Vagina (tissue), 2 donors: ENCODE measurements at regions of chr20 and their contacts with region 1.

Region 1: DNA sequence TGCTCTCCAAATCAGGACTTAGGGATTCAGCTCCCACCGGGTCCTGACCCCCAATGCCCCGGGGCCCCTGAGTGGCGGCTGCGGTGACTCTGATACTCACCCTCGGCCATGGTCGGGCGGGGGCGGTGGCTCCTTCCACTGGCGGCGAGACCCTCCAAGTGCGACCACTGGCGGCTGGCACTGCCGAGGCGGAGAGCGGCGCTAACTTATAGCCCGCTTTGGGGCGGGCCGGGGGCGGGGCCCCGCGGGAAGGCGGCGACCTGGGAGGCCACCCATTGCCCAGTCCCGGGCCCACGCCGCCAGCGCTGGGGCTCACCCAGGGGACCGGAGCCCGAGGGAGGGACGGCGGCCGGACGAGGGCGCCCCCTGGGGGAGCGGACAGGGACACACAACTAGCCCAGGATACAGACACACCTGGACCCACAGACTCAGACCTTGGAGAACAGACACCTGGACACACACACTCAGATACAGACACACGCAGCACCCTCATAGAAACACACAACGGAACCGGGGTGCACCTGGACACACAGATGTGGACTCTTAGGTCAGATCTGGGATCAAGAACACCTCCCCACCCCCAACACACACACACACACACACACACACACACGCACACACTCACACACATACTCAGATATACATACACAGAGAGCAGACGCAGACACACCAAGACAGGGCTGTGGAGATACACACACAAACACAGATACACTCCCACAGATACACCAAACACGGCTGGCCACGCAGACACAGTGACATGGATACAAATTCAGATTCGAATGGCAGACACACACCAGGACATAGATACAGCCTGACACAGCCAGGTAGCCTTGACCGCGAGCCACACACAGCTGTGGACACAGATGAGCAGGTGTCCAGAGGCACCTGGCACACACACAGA is at the start of gene TGM2:
- DNase-seq: no peak
- H3K4me3 ChIP-seq: peak within 1 kb of the TSS; percentile 54 to 62
- H3K27ac ChIP-seq: peak within 1 kb of the TSS; percentile 78
- H3K4me1 ChIP-seq: peaks cover 67% of the 10 kb centered on the region
- H3K27me3 ChIP-seq: no peaks in the 10 kb centered on the region
- CTCF ChIP-seq: peak; percentile 39 to 88 (median 65)
- POLR2A ChIP-seq: no peak
- total RNA-seq, gene TGM2: 92.8 TPM

Region 2: GRCh38 chr20:38073307-38074071 is 91.8 kb before region 1 on chr20:
- intact Hi-C with region 1: loop called (anchors 5 kb)
- DNase-seq: no peak
- H3K4me3 ChIP-seq: no peak overlapping the region
- H3K27ac ChIP-seq: peak overlapping the region; percentile 51
- H3K4me1 ChIP-seq: peaks cover 32% of the 10 kb centered on the region
- H3K27me3 ChIP-seq: no peaks in the 10 kb centered on the region
- CTCF ChIP-seq: peak; percentile 53 to 67 (median 58)
- POLR2A ChIP-seq: no peak

Region 3: GRCh38 chr20:38127011-38127621 is 38.2 kb before region 1 on chr20:
- intact Hi-C with region 1: no loop called
- DNase-seq: no peak
- H3K4me3 ChIP-seq: no peak overlapping the region
- H3K27ac ChIP-seq: peak overlapping the region; percentile 61
- H3K4me1 ChIP-seq: peaks cover 19% of the 10 kb centered on the region
- H3K27me3 ChIP-seq: no peaks in the 10 kb centered on the region
- CTCF ChIP-seq: no peak
- POLR2A ChIP-seq: no peak